ENCODE measurements at regions of chr17 and their contacts with region 1.

Region 1: DNA sequence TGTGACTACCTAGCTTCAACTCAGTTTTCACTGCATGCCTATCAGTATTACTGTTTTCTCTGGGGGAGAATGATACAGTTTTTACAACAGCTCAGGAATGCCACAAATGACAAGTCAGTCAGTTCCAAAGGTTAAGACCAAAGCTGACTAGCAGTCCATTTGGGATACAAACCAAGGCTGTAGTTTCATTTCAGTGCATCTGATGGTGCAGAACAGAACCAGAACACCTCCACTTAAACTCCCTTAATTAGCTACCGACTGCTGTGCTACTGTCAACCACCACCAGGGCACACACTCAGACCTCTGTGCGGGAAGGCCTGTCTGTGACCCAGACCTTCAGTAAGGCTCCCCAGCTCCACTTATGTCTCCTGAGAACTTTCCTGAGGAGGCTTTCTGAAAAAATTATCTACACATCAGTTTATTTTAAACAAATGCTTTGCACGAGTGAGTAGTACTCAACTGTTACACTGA is 20.4 kb downstream of the NFE2L1 start:
- DNase-seq: no peak
- CTCF ChIP-seq: no peak

Region 2: GRCh38 chr17:48024937-48025906 is 43.3 kb before region 1 on chr17:
- in situ Hi-C with region 1: loop called (anchors 5 kb)
- DNase-seq: peak; percentile 96
- CTCF ChIP-seq: peak; percentile 86